Calu3 (cell line): ENCODE measurements at regions of chr5 and their contacts with region 1.

Region 1: GRCh38 chr5:141878711-141879425 is 658 bp upstream of the PCDH1 start:
- DNase-seq: peak; percentile 93
- H3K4me3 Mint-ChIP-seq: peak overlapping the region; percentile 87
- H3K27ac Mint-ChIP-seq: peak overlapping the region; percentile 49
- H3K4me1 Mint-ChIP-seq: peaks cover 32% of the 10 kb centered on the region
- H3K27me3 Mint-ChIP-seq: peaks cover 44% of the 10 kb centered on the region
- CTCF ChIP-seq: peak; percentile 95

Region 2: GRCh38 chr5:141701360-141702119 is 177.3 kb before region 1 on chr5:
- CTCF ChIA-PET with region 1: interaction called, 12 read pairs
- intact Hi-C with region 1: loop called (anchors 1 kb)
- DNase-seq: no peak
- H3K4me3 Mint-ChIP-seq: peak overlapping the region; percentile 58
- H3K27ac Mint-ChIP-seq: no peak overlapping the region
- H3K4me1 Mint-ChIP-seq: peaks cover 2% of the 10 kb centered on the region
- H3K27me3 Mint-ChIP-seq: peaks cover 51% of the 10 kb centered on the region
- CTCF ChIP-seq: no peak

Region 3: DNA sequence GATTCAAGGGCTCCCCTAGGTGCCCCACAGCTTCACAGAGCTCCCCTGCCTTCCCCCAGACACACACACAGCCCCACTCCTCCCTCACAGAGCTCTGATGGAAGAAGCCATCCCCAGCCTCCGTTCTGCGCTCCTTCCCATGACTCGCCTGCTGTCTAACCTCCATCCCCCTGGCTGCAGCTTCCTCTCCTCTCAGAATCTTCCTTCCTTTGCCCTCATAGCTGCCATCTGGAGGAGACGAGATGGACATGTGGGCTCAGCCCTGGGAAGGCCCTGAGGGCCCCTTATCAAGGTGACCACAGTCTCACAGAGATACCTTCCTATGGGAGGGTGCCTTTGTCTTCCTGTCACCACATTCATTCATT is 94.9 kb before region 1 on chr5:
- CTCF ChIA-PET with region 1: interaction called, 4 read pairs
- intact Hi-C with region 1: loop called (anchors 2 kb)
- DNase-seq: no peak
- H3K4me3 Mint-ChIP-seq: no peak overlapping the region
- H3K27ac Mint-ChIP-seq: peak overlapping the region; percentile 4
- H3K4me1 Mint-ChIP-seq: peaks cover 54% of the 10 kb centered on the region
- H3K27me3 Mint-ChIP-seq: peaks cover 15% of the 10 kb centered on the region
- CTCF ChIP-seq: no peak

Region 4: DNA sequence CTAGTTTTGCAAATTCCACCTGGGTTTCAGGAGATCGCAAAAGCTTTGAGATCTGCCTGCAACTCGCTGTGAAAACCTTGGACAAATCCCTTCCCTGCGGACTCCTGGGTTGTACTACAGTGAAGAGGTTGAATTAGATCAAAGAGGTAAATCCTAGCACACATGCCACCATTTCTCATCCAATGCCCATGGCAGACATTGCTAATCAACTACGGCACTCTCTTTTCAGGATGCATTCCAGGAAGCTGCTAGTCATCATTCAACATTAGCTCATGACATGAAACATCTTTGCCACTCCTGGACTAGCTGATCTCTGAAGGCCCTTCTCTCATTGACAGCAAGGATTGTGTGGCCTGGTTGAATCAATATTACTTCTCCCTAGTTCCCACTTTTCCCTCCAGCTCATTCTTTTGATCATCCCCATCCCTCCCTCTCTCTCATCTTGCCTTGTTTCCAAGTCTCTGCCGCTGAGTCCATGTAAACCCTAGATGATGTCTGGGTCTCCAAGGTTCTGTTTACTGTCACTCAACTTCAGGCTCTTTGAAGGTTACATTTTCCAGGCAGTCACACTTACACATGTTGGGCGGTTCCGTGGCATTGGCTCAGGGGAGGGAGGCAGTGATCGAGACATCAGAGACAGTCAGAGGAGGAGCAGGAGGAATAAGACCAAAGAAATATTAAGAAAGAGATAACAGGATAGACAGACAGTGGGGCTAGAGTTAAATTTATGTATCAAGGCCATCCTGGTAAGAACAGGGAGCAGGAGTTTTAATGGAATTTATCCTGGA is 46.5 kb before region 1 on chr5:
- CTCF ChIA-PET with region 1: no interaction called
- intact Hi-C with region 1: loop called (anchors 1 kb)
- DNase-seq: no peak
- H3K4me3 Mint-ChIP-seq: no peak overlapping the region
- H3K27ac Mint-ChIP-seq: peak overlapping the region; percentile 61
- H3K4me1 Mint-ChIP-seq: peaks cover 32% of the 10 kb centered on the region
- H3K27me3 Mint-ChIP-seq: no peaks in the 10 kb centered on the region
- CTCF ChIP-seq: no peak

Region 5: DNA sequence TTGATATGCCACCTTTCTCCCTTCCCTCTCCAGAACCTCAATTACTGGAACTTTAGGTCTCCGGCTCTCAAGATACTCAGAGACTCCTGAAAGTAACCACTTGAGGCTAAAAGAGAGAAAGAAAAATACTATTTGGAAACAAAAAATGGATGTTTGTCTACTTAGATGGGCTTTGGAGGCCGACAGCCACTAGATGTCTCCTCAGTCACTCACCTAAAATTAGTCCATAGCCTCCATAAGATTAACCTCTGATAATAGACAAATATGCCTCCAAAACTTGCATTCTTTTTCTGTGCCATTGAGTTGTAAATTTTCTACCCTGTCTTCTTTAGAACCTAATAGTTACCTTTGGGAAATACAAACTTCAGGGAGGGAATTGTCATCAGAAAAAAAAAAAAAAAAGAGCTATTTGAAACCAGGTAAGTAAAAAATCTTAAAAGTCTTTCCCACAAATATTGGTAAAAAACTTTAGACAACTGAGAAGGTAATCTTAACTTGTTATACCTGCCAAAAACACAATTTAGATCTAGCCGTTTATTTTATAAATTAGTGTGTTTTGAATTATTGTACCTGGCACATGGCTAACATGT is 10.5 kb after region 1 on chr5:
- CTCF ChIA-PET with region 1: interaction called, 12 read pairs
- intact Hi-C with region 1: no loop called
- DNase-seq: no peak
- H3K4me3 Mint-ChIP-seq: no peak overlapping the region
- H3K27ac Mint-ChIP-seq: no peak overlapping the region
- H3K4me1 Mint-ChIP-seq: no peaks in the 10 kb centered on the region
- H3K27me3 Mint-ChIP-seq: peaks cover 24% of the 10 kb centered on the region
- CTCF ChIP-seq: no peak

Region 6: GRCh38 chr5:141992349-141992963 is 113.6 kb after region 1 on chr5:
- CTCF ChIA-PET with region 1: no interaction called
- intact Hi-C with region 1: no loop called
- DNase-seq: peak; percentile 79
- H3K4me3 Mint-ChIP-seq: no peak overlapping the region
- H3K27ac Mint-ChIP-seq: no peak overlapping the region
- H3K4me1 Mint-ChIP-seq: no peaks in the 10 kb centered on the region
- H3K27me3 Mint-ChIP-seq: no peaks in the 10 kb centered on the region
- CTCF ChIP-seq: peak; percentile 72